ENCODE measurements at regions of chr19 and their contacts with region 1.

Region 1: DNA sequence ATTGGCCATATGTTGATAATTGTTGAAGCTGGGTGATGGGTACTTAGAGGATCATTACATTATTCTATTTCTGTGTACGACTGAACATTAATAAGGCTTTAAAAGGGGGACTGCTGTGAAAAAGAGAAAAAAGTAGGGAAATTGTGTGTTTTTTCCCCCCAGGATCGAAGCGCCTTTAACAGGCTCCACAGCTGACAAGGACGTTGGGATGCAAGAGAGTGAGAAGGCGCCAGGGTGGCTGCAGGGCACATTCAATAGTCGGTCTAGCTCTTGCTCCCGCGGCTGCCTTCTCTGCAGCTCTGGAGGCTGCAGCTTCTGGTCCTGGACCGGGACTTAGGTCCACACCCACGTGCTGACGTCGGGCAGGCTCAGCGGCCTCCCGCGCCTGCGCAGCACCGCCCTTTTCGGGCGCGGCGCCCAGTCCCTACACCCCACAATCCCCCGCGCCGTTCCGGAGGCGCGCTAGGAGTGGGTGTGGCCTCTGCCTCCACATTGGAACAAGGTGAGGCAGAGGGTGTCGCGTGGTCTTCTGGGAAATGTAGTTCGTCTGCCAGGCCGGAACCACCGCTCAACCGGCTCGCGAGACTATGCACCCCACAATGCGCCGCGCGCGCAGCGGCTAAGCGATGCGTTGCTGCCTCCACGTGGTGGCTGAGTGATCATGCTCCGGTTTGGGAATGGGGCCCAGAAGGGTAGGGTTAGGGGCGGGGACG is 4.9 kb upstream of the LRFN3 start:
- DNase-seq: peak; percentile 99 to 100
- H3K4me3 ChIP-seq: no peak overlapping the region
- H3K27ac ChIP-seq: peak overlapping the region; percentile 57 to 68 (median 64)
- H3K4me1 ChIP-seq: peaks cover 6 to 16% of the 10 kb centered on the region in 2 donors
- H3K27me3 ChIP-seq: no peaks in the 10 kb centered on the region
- CTCF ChIP-seq: peak; percentile 53 to 99 (median 96)
- POLR2A ChIP-seq: peak in 1 of 2 donors; percentile 87

Region 2: GRCh38 chr19:35693830-35694599 is 237.3 kb before region 1 on chr19:
- intact Hi-C with region 1: loop called (anchors 5 kb)
- DNase-seq: peak; percentile 89 to 90
- H3K4me3 ChIP-seq: no peak overlapping the region
- H3K27ac ChIP-seq: no peak overlapping the region
- H3K4me1 ChIP-seq: no peaks in the 10 kb centered on the region
- H3K27me3 ChIP-seq: no peaks in the 10 kb centered on the region
- CTCF ChIP-seq: peak; percentile 94 to 99 (median 98)
- POLR2A ChIP-seq: no peak

Region 3: DNA sequence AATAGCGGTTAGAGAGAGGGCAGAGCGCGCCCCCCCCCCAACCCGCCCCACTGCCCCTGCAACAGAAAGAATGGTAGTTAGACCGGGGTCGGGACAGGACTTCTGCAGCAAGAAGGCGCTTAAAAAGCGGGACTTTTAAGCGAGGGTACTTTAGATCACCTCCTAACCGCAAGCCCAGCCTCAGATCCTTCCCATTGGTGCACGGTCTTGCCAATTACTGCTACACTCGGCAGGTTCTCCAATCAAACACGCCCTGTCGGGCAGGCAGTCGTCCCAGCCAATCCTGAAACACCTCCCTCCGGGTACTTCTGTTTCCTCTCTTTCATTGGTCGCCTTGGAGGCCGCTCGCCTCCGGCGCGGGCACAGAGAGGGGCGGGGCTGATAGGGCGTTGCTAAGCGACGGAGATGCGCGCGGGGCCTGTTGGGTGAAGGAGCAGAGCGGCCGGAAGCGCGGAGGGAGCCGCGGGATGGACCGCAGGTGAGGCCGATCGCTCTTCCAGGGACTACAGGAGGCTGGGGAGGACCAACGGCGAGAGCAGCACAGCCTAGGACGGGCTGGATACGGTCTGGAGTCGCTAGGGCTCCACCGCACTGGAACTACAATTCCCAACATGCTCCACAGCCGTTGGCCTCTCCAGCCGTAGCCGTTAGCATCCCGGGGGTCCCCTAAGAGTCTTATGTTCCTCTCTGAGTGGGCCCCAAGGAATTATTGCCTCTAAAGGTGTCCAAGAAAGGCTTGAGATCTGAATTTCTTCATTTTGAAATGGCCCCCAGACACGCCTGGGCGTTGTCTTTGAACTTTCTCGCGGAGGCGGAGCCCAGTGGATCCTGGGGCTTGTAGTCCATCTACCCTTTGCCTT is 173.3 kb before region 1 on chr19 and contains the start of gene PROSER3:
- intact Hi-C with region 1: loop called (anchors 10 kb)
- DNase-seq: peak; percentile 99
- H3K4me3 ChIP-seq: peak within 1 kb of the TSS; percentile 38 to 89 (median 62)
- H3K27ac ChIP-seq: peak within 1 kb of the TSS; percentile 82 to 96 (median 89)
- H3K4me1 ChIP-seq: peaks cover 13 to 20% of the 10 kb centered on the region in 2 donors
- H3K27me3 ChIP-seq: no peaks in the 10 kb centered on the region
- CTCF ChIP-seq: no peak
- POLR2A ChIP-seq: peak; percentile 55 to 74
- total RNA-seq, gene PROSER3: 8.2 to 34.3 (median 13.2) TPM

Region 4: DNA sequence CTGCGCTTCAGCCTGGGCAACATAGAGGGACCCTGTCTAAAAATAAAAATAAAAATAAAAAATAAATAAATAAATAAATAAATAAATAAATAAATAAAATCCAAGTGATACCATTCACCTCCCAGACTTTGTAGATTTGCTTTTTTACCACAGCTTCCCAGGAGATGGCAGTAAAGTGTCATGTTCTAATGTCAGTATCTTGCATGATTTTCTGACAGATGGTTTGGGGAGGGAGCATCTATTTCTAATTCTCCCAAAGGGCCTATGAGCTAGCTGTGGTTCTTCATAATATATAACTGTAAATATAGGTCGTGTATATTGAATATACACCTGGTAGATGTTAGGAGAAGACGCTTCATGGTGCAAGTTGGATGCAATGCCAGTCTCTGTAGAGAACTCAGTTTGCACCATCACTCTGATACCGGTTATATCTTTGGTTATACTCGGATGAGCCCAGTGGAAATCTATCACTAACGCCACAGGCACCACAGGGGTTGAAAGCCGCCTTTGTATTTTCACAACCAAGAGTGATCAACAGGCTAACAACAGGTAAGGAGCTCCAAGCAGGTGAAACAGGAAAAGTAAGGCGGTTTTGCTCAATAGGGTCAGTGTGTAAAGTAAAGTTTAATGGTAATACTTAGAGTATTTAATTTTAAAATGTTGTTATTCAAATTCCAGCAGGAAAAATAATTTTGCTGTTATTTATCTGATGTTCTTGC is 49.0 kb before region 1 on chr19:
- intact Hi-C with region 1: loop called (anchors 2 kb)
- DNase-seq: peak; percentile 28 to 39
- H3K4me3 ChIP-seq: no peak overlapping the region
- H3K27ac ChIP-seq: no peak overlapping the region
- H3K4me1 ChIP-seq: no peaks in the 10 kb centered on the region
- H3K27me3 ChIP-seq: no peaks in the 10 kb centered on the region
- CTCF ChIP-seq: peak in 5 of 6 experiments; percentile 20 to 75 (median 60)
- POLR2A ChIP-seq: no peak

Region 5: GRCh38 chr19:35899547-35900214 is 31.6 kb before region 1 on chr19:
- intact Hi-C with region 1: loop called (anchors 5 kb)
- DNase-seq: peak; percentile 88 to 91
- H3K4me3 ChIP-seq: peak overlapping the region; percentile 56 to 95 (median 79)
- H3K27ac ChIP-seq: peak overlapping the region; percentile 72 to 85 (median 84)
- H3K4me1 ChIP-seq: peaks cover 7 to 24% of the 10 kb centered on the region in 2 donors
- H3K27me3 ChIP-seq: no peaks in the 10 kb centered on the region
- CTCF ChIP-seq: no peak
- POLR2A ChIP-seq: no peak

Measured in thyroid gland (tissue), 4 donors.